ENCODE measurements at regions of chr9 and their contacts with region 1.

Region 1: GRCh38 chr9:125233678-125234077 is 7.5 kb downstream of the HSPA5 start:
- DNase-seq: peak; percentile 93
- H3K4me3 ChIP-seq: no peak overlapping the region
- H3K27ac ChIP-seq: peak overlapping the region; percentile 11
- H3K4me1 ChIP-seq: peaks cover 12% of the 10 kb centered on the region
- H3K27me3 ChIP-seq: no peaks in the 10 kb centered on the region
- CTCF ChIP-seq: no peak

Region 2: GRCh38 chr9:125200210-125201047 is 33.2 kb before region 1 on chr9 and contains the start of gene RABEPK:
- CTCF ChIA-PET with region 1: no interaction called
- dilution Hi-C with region 1: no loop called
- in situ Hi-C with region 1: no loop called
- intact Hi-C with region 1: loop called (anchors 2 kb)
- DNase-seq: peak; percentile 92
- H3K4me3 ChIP-seq: peak within 1 kb of the TSS; percentile 47 to 62 (median 59)
- H3K27ac ChIP-seq: peak within 1 kb of the TSS; percentile 87
- H3K4me1 ChIP-seq: peaks cover 5% of the 10 kb centered on the region
- H3K27me3 ChIP-seq: no peaks in the 10 kb centered on the region
- CTCF ChIP-seq: no peak
- total RNA-seq, gene RABEPK: 21.7 to 25.8 TPM

Region 3: GRCh38 chr9:125272697-125273096 is 39.0 kb after region 1 on chr9:
- CTCF ChIA-PET with region 1: no interaction called
- dilution Hi-C with region 1: no loop called
- in situ Hi-C with region 1: no loop called
- intact Hi-C with region 1: no loop called
- DNase-seq: peak; percentile 22
- H3K4me3 ChIP-seq: no peak overlapping the region
- H3K27ac ChIP-seq: no peak overlapping the region
- H3K4me1 ChIP-seq: peaks cover 7% of the 10 kb centered on the region
- H3K27me3 ChIP-seq: no peaks in the 10 kb centered on the region
- CTCF ChIP-seq: no peak

Region 4: DNA sequence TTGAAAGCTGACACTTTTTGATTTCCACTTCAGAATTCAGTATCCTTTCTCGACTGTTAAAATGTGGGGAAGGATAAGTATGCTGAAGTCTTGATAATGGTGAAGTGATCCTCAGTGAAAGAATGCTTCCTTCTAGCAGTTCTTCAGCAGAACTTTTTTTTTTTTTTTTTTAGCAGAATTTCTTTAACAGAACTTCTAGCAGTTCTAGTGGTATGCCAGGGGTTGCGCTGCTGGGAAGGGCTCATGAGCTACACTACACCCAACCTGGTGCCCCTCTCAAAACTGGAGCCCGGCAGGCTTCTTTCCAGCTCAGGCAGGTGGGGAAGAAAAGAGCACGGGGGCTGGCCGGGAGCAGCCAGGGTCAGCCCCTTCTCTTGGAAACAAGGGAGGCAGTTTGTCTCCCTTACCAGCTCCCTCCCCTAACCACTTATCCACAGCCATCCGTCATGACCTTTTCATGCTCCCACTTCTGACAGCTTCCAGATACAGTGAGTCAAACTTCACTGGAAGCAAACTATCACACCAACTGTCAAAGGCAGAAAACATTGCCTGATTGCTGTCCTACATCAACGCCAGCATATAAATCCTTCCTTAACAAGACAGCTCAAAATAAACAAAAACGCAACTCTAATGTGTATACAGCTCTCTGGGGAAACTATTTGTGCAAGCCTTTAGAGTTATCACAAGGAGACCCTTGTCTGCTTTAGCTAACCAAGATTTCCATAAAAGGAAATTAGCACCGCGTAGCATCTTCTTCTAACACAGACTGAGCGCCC is 239.4 kb after region 1 on chr9:
- CTCF ChIA-PET with region 1: no interaction called
- dilution Hi-C with region 1: no loop called
- in situ Hi-C with region 1: no loop called
- intact Hi-C with region 1: no loop called
- DNase-seq: no peak
- H3K4me3 ChIP-seq: no peak overlapping the region
- H3K27ac ChIP-seq: no peak overlapping the region
- H3K4me1 ChIP-seq: no peaks in the 10 kb centered on the region
- H3K27me3 ChIP-seq: no peaks in the 10 kb centered on the region
- CTCF ChIP-seq: no peak

Measured in mammary epithelial cell (primary cell).